IMR-90 (cell line): ENCODE measurements at regions of chr10 and their contacts with region 1.

Region 1: DNA sequence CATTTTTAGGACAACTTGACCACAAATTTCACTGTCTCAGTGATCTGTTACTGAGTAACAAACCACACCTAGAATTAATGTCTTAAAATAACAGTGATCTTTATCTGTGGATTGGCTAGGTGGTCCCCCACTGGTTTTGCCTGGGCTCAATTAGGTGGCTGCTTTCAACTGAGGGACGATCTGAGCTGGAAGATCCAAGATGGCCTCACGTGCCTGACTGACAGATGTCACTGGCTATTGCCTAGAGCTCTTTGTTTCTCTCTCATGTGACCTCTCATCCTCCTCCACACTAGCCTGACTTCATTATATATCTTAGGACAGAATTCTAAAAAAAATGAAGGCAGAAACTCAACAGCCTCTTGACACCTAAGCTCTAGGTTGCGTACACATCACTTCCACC is 59.7 kb downstream of the HACD1 start:
- DNase-seq: no peak
- ATAC-seq: no peak
- H3K4me3 ChIP-seq: no peak overlapping the region
- H3K27ac ChIP-seq: no peak overlapping the region
- H3K4me1 ChIP-seq: peaks cover 2% of the 10 kb centered on the region; the same call in 1 of the 2 replicates
- H3K27me3 ChIP-seq: no peaks in the 10 kb centered on the region
- CTCF ChIP-seq: no peak
- POLR2A ChIP-seq: no peak
- RAD21 ChIP-seq: no peak

Region 2: DNA sequence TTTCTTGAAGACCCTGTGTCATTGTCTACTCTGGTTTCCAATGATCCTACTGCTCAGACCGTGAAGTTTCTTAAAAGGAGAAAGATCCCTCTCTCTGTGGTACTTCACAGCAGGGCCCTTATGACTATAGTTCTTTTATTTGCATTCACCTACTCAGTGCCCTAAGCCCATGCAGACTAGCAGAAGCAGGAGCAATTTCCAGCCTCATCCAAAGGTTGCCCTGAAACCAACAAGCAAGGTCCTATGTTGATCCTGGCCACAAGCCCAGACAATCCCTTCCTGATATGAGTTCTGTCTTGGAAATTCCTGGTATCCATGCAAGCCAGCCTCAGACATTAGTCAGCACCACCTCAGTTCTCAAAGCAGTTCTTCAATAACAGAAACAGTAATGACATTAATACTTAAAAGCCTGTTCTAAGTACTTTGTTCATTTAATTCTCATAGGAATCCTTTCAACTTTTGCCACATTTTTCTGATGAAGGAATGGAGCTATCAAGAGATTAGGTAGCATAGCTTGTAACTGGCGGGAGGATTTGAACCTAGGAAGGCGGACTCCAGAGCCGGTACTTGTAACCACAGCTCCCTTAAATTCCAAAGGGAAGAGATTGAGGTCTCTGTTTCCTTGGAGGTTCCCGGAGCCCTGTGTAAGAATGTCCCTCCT is 45.0 kb before region 1 on chr10:
- CTCF ChIA-PET with region 1: no interaction called
- POLR2A ChIA-PET with region 1: interaction called, 11 read pairs
- dilution Hi-C with region 1: no loop called
- in situ Hi-C with region 1: no loop called
- intact Hi-C with region 1: no loop called
- DNase-seq: peak; percentile 98
- ATAC-seq: peak; percentile 93
- H3K4me3 ChIP-seq: peak overlapping the region; percentile 17; the same call in 1 of the 2 replicates
- H3K27ac ChIP-seq: peak overlapping the region; percentile 90
- H3K4me1 ChIP-seq: peaks cover 13% of the 10 kb centered on the region
- H3K27me3 ChIP-seq: no peaks in the 10 kb centered on the region
- CTCF ChIP-seq: no peak
- POLR2A ChIP-seq: no peak
- RAD21 ChIP-seq: 0 out of 2 replicates have a peak, but pooled peaks have one; percentile 16